ENCODE measurements at regions of chr10 and their contacts with region 1.

Region 1: DNA sequence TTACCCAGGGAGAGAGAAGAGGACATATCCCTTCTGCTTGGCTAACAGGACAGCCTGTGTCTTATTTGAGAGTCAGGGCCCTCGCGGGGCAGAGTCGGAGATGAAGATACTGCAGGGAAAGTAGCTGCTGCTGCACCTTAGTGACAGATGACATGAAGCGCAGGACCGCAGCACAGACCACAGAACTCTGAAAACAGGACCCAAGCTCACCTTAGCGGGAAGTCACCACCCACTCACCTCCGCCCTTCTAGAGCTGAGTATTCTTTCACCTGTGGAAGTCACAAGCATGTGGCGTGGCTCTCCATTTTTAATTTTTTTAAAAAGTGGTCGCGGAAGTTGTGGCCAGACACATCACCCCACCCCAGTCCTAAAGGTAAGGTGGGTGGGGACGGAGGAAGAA is 191.4 kb downstream of the FAM107B start:
- DNase-seq: peak; percentile 96
- ATAC-seq: peak; percentile 63
- H3K4me3 Mint-ChIP-seq: peak overlapping the region; percentile 54
- H3K27ac Mint-ChIP-seq: peak overlapping the region; percentile 97
- H3K4me1 Mint-ChIP-seq: peaks cover 87% of the 10 kb centered on the region
- H3K27me3 Mint-ChIP-seq: no peaks in the 10 kb centered on the region
- CTCF ChIP-seq: no peak

Region 2: DNA sequence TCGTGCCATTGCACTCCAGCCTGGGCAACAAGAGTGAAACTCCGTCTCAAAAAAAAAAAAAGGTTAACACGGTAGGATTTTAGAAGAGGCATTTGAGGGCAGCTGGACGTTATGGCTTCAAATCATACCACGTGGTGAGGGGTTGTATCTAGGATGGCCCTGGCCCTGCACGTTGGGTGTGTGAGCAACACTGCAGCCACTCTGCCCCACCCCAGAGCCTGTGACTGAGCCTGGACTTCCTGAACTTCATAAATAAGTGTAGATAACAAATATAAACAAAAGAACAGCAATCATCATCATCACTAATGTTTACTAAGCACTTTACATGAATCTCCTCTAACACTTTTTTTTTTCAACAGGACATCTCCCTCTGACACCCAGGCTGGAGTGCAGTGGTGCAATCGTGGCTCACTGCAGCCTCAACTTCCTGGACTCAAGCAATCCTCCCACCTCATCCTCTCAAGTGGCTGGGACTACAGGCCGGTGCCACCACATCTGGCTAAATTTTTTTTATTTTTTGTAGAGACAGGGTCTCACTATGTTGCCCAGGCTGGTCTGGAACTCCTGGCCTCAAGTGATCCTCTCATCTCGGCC is 83.0 kb before region 1 on chr10:
- CTCF ChIA-PET with region 1: no interaction called
- POLR2A ChIA-PET with region 1: no interaction called
- intact Hi-C with region 1: no loop called
- DNase-seq: no peak
- ATAC-seq: no peak
- H3K4me3 Mint-ChIP-seq: no peak overlapping the region
- H3K27ac Mint-ChIP-seq: no peak overlapping the region
- H3K4me1 Mint-ChIP-seq: peaks cover 7% of the 10 kb centered on the region
- H3K27me3 Mint-ChIP-seq: no peaks in the 10 kb centered on the region
- CTCF ChIP-seq: no peak

Region 3: GRCh38 chr10:14571866-14572507 is 11.3 kb before region 1 on chr10:
- CTCF ChIA-PET with region 1: interaction called, 7 read pairs
- POLR2A ChIA-PET with region 1: interaction called, 21 read pairs
- intact Hi-C with region 1: no loop called
- DNase-seq: peak; percentile 81
- ATAC-seq: peak; percentile 84
- H3K4me3 Mint-ChIP-seq: peak overlapping the region; percentile 76
- H3K27ac Mint-ChIP-seq: peak overlapping the region; percentile 92
- H3K4me1 Mint-ChIP-seq: peaks cover 85% of the 10 kb centered on the region
- H3K27me3 Mint-ChIP-seq: no peaks in the 10 kb centered on the region
- CTCF ChIP-seq: no peak

Region 4: GRCh38 chr10:14736600-14737081 is 153.4 kb after region 1 on chr10:
- CTCF ChIA-PET with region 1: no interaction called
- POLR2A ChIA-PET with region 1: no interaction called
- intact Hi-C with region 1: no loop called
- DNase-seq: no peak
- ATAC-seq: no peak
- H3K4me3 Mint-ChIP-seq: no peak overlapping the region
- H3K27ac Mint-ChIP-seq: peak overlapping the region; percentile 20
- H3K4me1 Mint-ChIP-seq: peaks cover 14% of the 10 kb centered on the region
- H3K27me3 Mint-ChIP-seq: no peaks in the 10 kb centered on the region
- CTCF ChIP-seq: no peak

Measured in activated CD8-positive, alpha-beta T cell treated with anti-CD3 and anti-CD28 coated beads for 36 hours (primary cell).